Gastrocnemius medialis (tissue), 4 donors: ENCODE measurements at regions of chr5 and their contacts with region 1.

Region 1: DNA sequence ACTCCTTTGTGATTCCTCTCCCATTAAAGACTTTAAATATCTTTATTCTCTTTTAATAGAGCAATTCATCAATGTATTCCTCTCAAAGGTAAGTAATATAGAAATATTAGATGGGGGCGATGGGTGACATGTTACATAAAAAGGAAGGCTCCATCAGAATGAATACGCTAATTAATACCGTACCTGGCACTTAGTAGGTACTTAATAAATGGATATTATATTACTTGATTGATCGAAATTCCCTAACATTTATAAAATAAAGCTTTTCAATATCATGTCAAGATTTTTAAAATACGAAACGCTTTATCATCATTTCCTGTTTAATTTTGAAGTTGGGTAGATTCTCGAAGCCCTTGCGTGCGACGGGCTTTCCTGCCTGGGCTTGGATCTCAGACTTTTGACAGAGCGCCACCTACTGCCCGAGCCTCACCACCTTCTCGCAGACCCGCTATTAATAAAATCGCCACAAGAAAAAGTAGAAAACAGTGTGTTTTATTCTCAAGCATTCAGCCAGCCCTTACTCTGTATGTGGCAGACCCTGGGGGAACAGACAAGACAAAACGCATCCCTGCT is 99.4 kb downstream of the C5orf15 start:
- DNase-seq: peak; percentile 53 to 62
- ATAC-seq: peak; percentile 79 to 80
- H3K4me3 ChIP-seq: peak overlapping the region; percentile 42 to 58 (median 44)
- H3K27ac ChIP-seq: peak overlapping the region; percentile 74 to 83 (median 77)
- H3K4me1 ChIP-seq: peaks cover 8 to 9% of the 10 kb centered on the region in 2 donors
- H3K27me3 ChIP-seq: no peaks in the 10 kb centered on the region
- CTCF ChIP-seq: peak; percentile 80 to 86 (median 82)
- POLR2A ChIP-seq: no peak

Region 2: DNA sequence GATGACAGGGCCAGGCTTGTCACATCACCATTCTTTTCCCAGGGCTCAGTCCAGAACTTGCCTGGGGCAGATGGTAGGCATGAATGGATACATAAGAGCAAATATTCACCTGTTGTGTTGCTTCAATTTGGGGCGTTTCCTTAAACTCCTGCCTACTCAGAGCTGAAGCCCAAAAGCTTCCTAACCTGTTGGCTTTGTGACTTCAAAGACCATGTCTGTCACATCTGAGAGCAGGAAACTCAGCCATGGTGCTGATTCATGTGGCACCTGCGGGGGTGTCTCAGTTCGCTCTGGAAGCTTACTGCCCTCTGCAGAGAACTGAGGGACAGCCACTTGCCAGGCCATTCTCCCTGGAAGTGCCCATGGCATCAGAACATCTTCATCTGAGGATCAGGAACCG is 570.6 kb before region 1 on chr5:
- in situ Hi-C with region 1: no loop called
- intact Hi-C with region 1: no loop called
- DNase-seq: no peak
- ATAC-seq: no peak
- H3K4me3 ChIP-seq: no peak overlapping the region
- H3K27ac ChIP-seq: no peak overlapping the region
- H3K4me1 ChIP-seq: no peaks in the 10 kb centered on the region
- H3K27me3 ChIP-seq: no peaks in the 10 kb centered on the region
- CTCF ChIP-seq: no peak
- POLR2A ChIP-seq: no peak

Region 3: DNA sequence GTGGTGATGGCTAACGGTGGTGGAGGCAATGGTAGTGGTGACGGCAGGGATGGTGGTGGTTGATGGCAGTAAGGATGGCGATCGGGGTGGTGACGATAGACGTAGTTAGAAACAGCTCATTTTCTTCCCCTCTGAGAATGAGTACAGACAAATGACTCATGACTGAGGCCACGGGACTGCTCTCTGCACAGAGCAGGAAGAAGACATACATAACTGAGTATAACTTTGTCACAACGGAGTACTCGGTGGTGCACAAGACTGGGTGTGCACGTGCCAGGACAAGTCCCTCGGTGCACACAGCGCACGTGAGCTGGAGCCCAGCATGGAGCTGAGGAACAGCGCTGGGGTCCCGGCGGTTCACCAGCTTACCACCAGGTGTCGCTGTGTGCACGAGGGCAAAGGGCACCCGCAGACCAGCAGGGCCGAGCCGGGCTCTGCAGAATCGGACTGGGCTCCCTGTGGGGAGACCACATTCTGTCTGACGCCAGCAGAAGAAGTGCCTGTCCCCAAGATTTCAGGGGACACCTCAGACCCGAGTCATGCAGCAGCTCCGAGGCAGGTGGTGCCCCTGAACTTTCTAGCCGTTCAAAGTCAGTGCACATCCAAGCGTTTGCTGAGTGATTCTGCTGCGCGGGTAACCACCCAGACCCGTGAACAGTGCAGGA is 445.3 kb before region 1 on chr5:
- in situ Hi-C with region 1: loop called in 2 of 4 experiments (anchors 10 to 25 kb)
- intact Hi-C with region 1: no loop called
- DNase-seq: peak; percentile 26 to 29
- ATAC-seq: peak; percentile 50 to 72
- H3K4me3 ChIP-seq: no peak overlapping the region
- H3K27ac ChIP-seq: no peak overlapping the region
- H3K4me1 ChIP-seq: no peaks in the 10 kb centered on the region
- H3K27me3 ChIP-seq: no peaks in the 10 kb centered on the region
- CTCF ChIP-seq: peak; percentile 76 to 88 (median 81)
- POLR2A ChIP-seq: no peak

Region 4: GRCh38 chr5:133773247-133774202 is 95.5 kb before region 1 on chr5:
- in situ Hi-C with region 1: loop called in 3 of 4 experiments (anchors 10 kb)
- intact Hi-C with region 1: loop called (anchors 1 kb)
- DNase-seq: no peak
- ATAC-seq: peak; percentile 81 to 87
- H3K4me3 ChIP-seq: no peak overlapping the region
- H3K27ac ChIP-seq: peak overlapping the region; percentile 39 to 78 (median 68)
- H3K4me1 ChIP-seq: peaks cover 8 to 11% of the 10 kb centered on the region in 2 donors
- H3K27me3 ChIP-seq: no peaks in the 10 kb centered on the region
- CTCF ChIP-seq: peak in 3 of 5 experiments; percentile 4 to 28 (median 8)
- POLR2A ChIP-seq: no peak

Region 5: DNA sequence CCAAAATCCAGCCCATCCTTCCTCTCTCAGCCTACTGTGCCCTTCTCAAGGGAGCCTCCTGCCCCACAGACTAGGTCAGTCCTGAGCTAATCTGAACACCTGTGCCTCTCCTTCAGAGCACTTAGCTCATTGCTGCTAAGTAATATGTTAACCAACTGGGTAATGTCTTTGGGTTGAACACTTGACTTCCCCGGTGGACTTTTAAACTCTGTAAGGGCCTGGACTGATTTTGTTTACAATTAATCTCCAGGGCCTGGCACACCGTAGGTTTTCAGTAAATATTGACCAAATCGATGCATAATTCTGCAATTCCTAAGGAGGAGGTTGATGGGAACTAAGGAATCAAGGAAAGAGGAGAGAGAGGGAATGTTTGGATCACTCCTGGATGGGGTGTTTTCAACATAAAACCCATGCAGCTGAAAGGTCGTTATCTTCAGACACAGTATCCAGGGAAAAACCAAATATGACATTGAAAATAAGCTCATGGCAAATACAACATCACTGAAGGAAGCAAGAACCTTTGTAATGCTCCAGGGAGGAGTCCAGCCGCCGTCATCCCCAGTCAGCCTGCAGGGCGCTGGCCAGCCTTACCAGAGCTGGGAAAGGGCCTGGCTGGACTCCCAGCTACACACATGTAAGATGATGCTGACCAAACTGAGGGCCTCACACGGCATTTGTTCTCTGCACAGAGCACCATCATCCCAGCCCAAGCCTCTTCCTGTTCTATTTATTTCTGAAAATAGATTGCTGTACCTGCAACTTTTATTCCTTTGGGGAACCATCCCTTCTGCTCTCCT is 66.9 kb before region 1 on chr5:
- in situ Hi-C with region 1: no loop called
- intact Hi-C with region 1: loop called (anchors 1 kb)
- DNase-seq: peak; percentile 81 to 88
- ATAC-seq: peak; percentile 96 to 99
- H3K4me3 ChIP-seq: no peak overlapping the region
- H3K27ac ChIP-seq: peak overlapping the region; percentile 67 to 85 (median 70)
- H3K4me1 ChIP-seq: peaks cover 8 to 10% of the 10 kb centered on the region in 2 donors
- H3K27me3 ChIP-seq: no peaks in the 10 kb centered on the region
- CTCF ChIP-seq: peak in 1 of 5 experiments; percentile 10
- POLR2A ChIP-seq: no peak

Region 6: GRCh38 chr5:134176511-134177368 is 307.7 kb after region 1 on chr5 and contains the start of gene SKP1:
- in situ Hi-C with region 1: no loop called
- intact Hi-C with region 1: no loop called
- DNase-seq: peak; percentile 68 to 77
- ATAC-seq: peak; percentile 72 to 76
- H3K4me3 ChIP-seq: peak within 1 kb of the TSS; percentile 96 to 99 (median 98)
- H3K27ac ChIP-seq: peak within 1 kb of the TSS; percentile 93 to 99 (median 96)
- H3K4me1 ChIP-seq: peaks cover 45 to 46% of the 10 kb centered on the region in 2 donors
- H3K27me3 ChIP-seq: no peaks in the 10 kb centered on the region
- CTCF ChIP-seq: no peak
- POLR2A ChIP-seq: peak; percentile 96 to 97
- total RNA-seq, gene SKP1: 318 to 499 (median 476) TPM